MCF 10A (cell line): ENCODE measurements at regions of chr12 and their contacts with region 1.

Region 1: DNA sequence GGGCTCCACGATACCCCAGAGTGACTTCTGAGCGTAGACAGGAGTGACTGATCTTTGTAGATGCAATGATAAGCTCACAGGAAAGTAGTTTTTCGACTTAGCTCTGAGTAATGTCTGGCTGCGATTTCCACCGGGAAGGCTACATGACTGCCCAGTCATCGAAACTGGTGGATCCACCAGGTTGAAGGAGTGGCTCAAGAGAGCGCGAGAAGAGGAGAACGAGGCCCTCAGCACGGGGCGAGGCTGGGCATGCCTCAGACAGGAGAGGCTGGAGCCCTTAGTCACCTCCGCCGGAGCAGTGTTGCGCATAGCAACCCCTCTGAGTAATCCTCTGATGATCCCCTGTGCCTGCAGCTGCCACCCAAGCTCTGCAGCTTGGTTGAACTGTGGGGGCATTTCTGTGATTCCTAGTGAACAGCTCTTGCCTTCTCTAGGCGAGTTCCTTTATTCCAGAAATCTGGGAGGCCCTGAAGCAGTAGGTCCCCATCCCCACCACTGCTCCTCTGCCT is 25.6 kb downstream of the ELK3 start:
- DNase-seq: peak; percentile 99
- H3K4me3 Mint-ChIP-seq: peak overlapping the region; percentile 76
- H3K27ac Mint-ChIP-seq: peak overlapping the region; percentile 100
- H3K4me1 Mint-ChIP-seq: peaks cover 51% of the 10 kb centered on the region
- H3K27me3 Mint-ChIP-seq: no peaks in the 10 kb centered on the region
- CTCF ChIP-seq: no peak

Region 2: DNA sequence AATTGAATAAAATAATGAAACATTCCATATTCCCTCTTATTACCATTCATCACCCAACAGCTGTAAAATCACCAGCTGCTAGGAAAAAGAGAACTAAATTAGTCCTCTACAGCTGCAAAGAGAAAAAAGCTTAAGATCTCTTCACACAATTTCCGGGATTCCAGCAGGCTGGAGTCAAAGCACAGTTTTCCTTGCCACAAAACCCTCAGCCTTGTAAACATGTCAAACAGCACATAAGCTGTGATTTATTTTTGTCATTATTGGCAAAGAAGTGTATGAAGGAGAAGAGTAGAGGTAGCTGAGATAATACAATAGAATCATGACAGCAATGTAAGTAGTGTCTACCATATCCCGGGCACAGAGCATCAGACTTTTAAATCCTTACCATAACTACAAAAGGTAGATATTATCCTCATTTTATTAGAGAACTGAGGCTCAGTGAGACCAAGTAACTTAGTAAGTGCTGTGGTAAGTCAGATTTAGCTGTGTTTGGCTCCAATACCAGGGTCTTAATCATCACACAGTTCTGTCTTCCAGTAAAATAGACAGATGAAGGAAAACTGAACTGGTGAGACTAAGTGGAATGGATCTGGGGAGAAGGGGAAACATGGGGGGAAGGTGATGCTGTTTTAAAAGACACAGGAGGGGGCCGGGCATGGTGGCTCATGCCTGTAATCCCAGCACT is 486.5 kb before region 1 on chr12:
- CTCF ChIA-PET with region 1: no interaction called
- POLR2A ChIA-PET with region 1: no interaction called
- intact Hi-C with region 1: no loop called
- DNase-seq: peak; percentile 25
- H3K4me3 Mint-ChIP-seq: no peak overlapping the region
- H3K27ac Mint-ChIP-seq: no peak overlapping the region
- H3K4me1 Mint-ChIP-seq: peaks cover 10% of the 10 kb centered on the region
- H3K27me3 Mint-ChIP-seq: no peaks in the 10 kb centered on the region
- CTCF ChIP-seq: no peak

Region 3: DNA sequence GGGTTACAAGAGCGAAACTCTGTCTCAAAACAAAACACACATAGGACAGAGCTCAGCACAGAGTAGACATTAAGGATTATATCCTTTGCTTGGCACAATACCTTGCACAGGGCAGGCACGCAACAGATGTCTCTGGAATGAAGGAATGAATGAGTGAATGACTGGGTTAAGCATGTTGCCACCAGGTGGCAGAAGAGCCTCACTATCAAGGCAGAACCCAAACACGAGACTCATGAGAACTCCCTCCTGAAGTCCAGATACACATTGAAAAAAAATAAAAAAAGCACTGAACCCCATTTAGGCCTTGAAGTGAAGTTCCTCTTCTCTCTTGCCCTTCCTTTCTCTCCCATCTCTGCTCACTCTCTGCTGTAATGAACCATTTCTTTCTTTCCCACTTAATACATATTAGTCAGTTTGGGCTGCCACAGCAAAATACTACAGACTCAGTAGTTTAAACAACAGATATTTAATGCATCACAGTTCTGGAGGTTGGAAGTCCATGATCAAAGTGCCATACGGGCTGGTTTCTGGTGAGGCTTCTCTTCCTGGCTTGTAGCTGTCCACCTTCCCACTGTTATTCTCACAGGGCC is 157.8 kb before region 1 on chr12:
- CTCF ChIA-PET with region 1: interaction called, 190 read pairs
- POLR2A ChIA-PET with region 1: interaction called, 4 read pairs
- intact Hi-C with region 1: loop called (anchors 1 kb)
- DNase-seq: peak; percentile 87
- H3K4me3 Mint-ChIP-seq: no peak overlapping the region
- H3K27ac Mint-ChIP-seq: no peak overlapping the region
- H3K4me1 Mint-ChIP-seq: peaks cover 5% of the 10 kb centered on the region
- H3K27me3 Mint-ChIP-seq: no peaks in the 10 kb centered on the region
- CTCF ChIP-seq: peak; percentile 82

Region 4: DNA sequence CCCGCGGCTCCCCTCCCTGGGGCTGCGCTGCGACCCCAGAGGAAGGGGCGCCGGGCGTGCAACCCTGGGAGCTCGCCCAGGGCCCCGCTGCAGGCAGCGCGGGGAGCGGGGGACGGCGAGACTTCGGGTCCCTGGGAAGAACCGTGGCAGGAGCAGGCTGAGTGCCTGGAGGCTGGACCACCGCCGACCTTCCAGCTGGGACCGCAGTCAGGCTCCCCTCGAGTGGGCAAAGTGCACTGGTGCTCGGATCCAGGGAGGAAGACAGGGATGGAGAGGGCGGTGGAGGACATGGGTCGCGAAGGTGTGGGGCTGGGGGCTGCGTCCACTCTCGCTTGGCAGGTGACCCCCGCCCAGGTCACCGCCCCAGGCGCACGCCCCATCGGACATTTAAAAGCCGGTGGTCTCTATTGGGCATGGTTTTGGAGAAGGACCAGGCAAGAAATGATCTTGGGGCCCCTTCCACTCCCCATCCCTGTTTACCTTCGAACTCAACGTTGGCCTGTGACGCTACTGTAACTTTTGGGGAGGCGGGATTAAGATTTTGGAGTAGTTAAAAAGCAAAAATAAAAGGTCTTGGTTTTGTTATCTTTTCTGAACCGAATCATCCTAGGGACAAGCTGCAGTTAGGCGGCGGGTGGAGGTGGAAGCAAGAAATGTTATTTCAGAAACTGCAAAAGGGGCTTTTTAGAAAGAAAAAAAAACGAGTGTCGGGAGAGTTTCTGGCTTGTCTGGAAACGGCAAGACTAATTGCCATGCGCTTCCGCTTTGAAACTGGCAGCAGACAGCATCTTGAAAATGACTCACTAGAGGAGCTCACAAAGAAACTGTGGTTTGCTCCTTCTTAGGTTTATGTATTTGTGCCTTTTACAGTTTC is 24.5 kb before region 1 on chr12:
- CTCF ChIA-PET with region 1: interaction called, 15 read pairs
- POLR2A ChIA-PET with region 1: interaction called, 187 read pairs
- intact Hi-C with region 1: loop called (anchors 1 kb)
- DNase-seq: peak; percentile 85
- H3K4me3 Mint-ChIP-seq: peak overlapping the region; percentile 95
- H3K27ac Mint-ChIP-seq: peak overlapping the region; percentile 75
- H3K4me1 Mint-ChIP-seq: peaks cover 13% of the 10 kb centered on the region
- H3K27me3 Mint-ChIP-seq: no peaks in the 10 kb centered on the region
- CTCF ChIP-seq: no peak

Region 5: GRCh38 chr12:96237465-96238077 is 17.8 kb after region 1 on chr12:
- CTCF ChIA-PET with region 1: interaction called, 15 read pairs
- POLR2A ChIA-PET with region 1: interaction called, 77 read pairs
- intact Hi-C with region 1: loop called (anchors 2 kb)
- DNase-seq: peak; percentile 93
- H3K4me3 Mint-ChIP-seq: peak overlapping the region; percentile 32
- H3K27ac Mint-ChIP-seq: peak overlapping the region; percentile 95
- H3K4me1 Mint-ChIP-seq: peaks cover 47% of the 10 kb centered on the region
- H3K27me3 Mint-ChIP-seq: no peaks in the 10 kb centered on the region
- CTCF ChIP-seq: no peak

Region 6: DNA sequence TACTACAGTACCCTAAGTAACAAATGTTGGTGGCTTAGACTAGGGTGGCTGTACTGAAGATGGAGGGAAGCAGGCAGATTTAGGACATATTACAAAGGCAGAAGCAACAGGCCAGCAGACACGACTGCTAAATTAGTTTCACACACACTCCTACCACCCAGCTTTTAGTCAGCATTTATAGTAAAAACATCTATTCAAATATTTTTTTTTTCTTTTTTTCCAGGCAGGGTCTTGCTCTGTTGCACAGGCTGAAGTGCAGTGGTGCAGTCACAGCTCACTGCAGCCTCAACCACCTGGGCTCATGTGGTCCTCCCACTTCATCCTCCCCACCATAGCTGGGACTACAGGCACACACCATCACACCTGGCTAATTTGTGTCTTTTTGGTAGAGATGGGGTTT is 107.6 kb after region 1 on chr12:
- CTCF ChIA-PET with region 1: no interaction called
- POLR2A ChIA-PET with region 1: no interaction called
- intact Hi-C with region 1: no loop called
- DNase-seq: no peak
- H3K4me3 Mint-ChIP-seq: no peak overlapping the region
- H3K27ac Mint-ChIP-seq: no peak overlapping the region
- H3K4me1 Mint-ChIP-seq: peaks cover 13% of the 10 kb centered on the region
- H3K27me3 Mint-ChIP-seq: no peaks in the 10 kb centered on the region
- CTCF ChIP-seq: no peak

Region 7: GRCh38 chr12:96383991-96384390 is 164.2 kb after region 1 on chr12:
- CTCF ChIA-PET with region 1: no interaction called
- POLR2A ChIA-PET with region 1: no interaction called
- intact Hi-C with region 1: no loop called
- DNase-seq: no peak
- H3K4me3 Mint-ChIP-seq: peak overlapping the region; percentile 5
- H3K27ac Mint-ChIP-seq: peak overlapping the region; percentile 43
- H3K4me1 Mint-ChIP-seq: peaks cover 22% of the 10 kb centered on the region
- H3K27me3 Mint-ChIP-seq: no peaks in the 10 kb centered on the region
- CTCF ChIP-seq: no peak

Region 8: GRCh38 chr12:96501139-96501761 is 281.5 kb after region 1 on chr12:
- CTCF ChIA-PET with region 1: interaction called, 4 read pairs
- POLR2A ChIA-PET with region 1: interaction called, 3 read pairs
- intact Hi-C with region 1: loop called (anchors 5 kb)
- DNase-seq: peak; percentile 89
- H3K4me3 Mint-ChIP-seq: no peak overlapping the region
- H3K27ac Mint-ChIP-seq: peak overlapping the region; percentile 99
- H3K4me1 Mint-ChIP-seq: peaks cover 30% of the 10 kb centered on the region
- H3K27me3 Mint-ChIP-seq: no peaks in the 10 kb centered on the region
- CTCF ChIP-seq: no peak